HepG2 (cell line): ENCODE measurements at regions of chr3 and their contacts with region 1.

Region 1: GRCh38 chr3:178436773-178437172 is 99.5 kb upstream of the KCNMB2 start:
- DNase-seq: no peak
- ATAC-seq: no peak
- H3K4me3 ChIP-seq: no peak overlapping the region
- H3K27ac ChIP-seq: no peak overlapping the region
- H3K4me1 ChIP-seq: no peaks in the 10 kb centered on the region
- H3K27me3 ChIP-seq: no peaks in the 10 kb centered on the region
- CTCF ChIP-seq: peak; percentile 41
- EP300 ChIP-seq: no peak
- POLR2A ChIP-seq: no peak
- RAD21 ChIP-seq: no peak

Region 2: GRCh38 chr3:178393824-178394223 is 42.9 kb before region 1 on chr3:
- CTCF ChIA-PET with region 1: no interaction called
- POLR2A ChIA-PET with region 1: no interaction called
- in situ Hi-C with region 1: no loop called
- intact Hi-C with region 1: no loop called
- DNase-seq: no peak
- ATAC-seq: no peak
- H3K4me3 ChIP-seq: no peak overlapping the region
- H3K27ac ChIP-seq: no peak overlapping the region
- H3K4me1 ChIP-seq: no peaks in the 10 kb centered on the region
- H3K27me3 ChIP-seq: no peaks in the 10 kb centered on the region
- CTCF ChIP-seq: no peak
- EP300 ChIP-seq: no peak
- POLR2A ChIP-seq: no peak
- RAD21 ChIP-seq: no peak

Region 3: DNA sequence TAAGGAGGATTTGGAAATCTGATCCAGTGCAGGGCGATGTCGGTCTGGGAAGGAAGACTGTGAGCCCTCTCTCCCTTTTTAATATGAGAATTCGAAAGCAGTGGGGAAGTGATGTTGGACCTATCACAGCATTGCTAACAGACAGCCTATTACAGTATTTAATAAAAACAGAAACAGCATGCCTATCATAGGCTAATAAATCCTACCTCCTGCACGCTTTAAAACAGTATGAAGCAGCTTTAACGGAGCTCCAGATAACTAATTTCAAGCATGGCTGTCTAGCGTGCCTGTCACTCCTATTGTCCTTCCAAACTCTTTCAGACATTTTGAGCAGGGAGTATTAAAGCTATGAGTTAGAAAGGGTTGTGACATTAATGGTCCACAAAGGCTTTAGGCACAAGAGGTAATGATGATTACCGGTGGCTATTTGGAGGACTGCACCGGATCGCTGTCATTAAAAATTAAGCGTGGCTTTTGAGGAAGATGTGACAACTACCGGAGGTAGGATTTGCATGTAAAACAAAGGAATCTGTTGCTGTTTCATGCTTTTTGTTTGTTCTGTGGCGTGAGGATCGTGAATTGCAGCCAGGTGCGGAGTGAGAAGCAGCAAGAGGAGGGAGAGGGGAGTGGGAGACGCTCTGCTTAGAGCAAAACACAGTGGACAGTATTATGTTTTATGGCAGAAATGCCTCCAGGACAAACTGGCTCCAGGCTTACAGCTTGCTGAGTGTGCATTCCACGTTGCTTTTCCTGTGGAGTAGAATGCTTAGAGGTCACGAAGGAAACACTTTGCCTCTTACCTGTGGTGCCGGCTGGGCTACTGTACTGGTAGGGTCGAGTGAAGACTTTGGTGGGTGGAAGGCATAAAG is 99.7 kb after region 1 on chr3 and contains the start of gene KCNMB2:
- CTCF ChIA-PET with region 1: no interaction called
- POLR2A ChIA-PET with region 1: no interaction called
- in situ Hi-C with region 1: no loop called
- intact Hi-C with region 1: no loop called
- DNase-seq: no peak
- ATAC-seq: no peak
- H3K4me3 ChIP-seq: no peak within 1 kb of the TSS
- H3K27ac ChIP-seq: no peak within 1 kb of the TSS
- H3K4me1 ChIP-seq: no peaks in the 10 kb centered on the region
- H3K27me3 ChIP-seq: peaks cover 0 to 5% of the 10 kb centered on the region in 2 experiments; a peak in 1 of 5 replicates
- CTCF ChIP-seq: no peak
- EP300 ChIP-seq: no peak
- POLR2A ChIP-seq: no peak
- RAD21 ChIP-seq: no peak
- total RNA-seq, gene KCNMB2: not detected in 2 replicates

Region 4: GRCh38 chr3:178768072-178768864 is 331.5 kb after region 1 on chr3:
- CTCF ChIA-PET with region 1: no interaction called
- POLR2A ChIA-PET with region 1: no interaction called
- in situ Hi-C with region 1: no loop called
- intact Hi-C with region 1: loop called (anchors 10 kb)
- DNase-seq: no peak
- ATAC-seq: no peak
- H3K4me3 ChIP-seq: no peak overlapping the region
- H3K27ac ChIP-seq: no peak overlapping the region
- H3K4me1 ChIP-seq: no peaks in the 10 kb centered on the region
- H3K27me3 ChIP-seq: no peaks in the 10 kb centered on the region
- CTCF ChIP-seq: no peak
- EP300 ChIP-seq: no peak
- POLR2A ChIP-seq: no peak
- RAD21 ChIP-seq: no peak

Region 5: DNA sequence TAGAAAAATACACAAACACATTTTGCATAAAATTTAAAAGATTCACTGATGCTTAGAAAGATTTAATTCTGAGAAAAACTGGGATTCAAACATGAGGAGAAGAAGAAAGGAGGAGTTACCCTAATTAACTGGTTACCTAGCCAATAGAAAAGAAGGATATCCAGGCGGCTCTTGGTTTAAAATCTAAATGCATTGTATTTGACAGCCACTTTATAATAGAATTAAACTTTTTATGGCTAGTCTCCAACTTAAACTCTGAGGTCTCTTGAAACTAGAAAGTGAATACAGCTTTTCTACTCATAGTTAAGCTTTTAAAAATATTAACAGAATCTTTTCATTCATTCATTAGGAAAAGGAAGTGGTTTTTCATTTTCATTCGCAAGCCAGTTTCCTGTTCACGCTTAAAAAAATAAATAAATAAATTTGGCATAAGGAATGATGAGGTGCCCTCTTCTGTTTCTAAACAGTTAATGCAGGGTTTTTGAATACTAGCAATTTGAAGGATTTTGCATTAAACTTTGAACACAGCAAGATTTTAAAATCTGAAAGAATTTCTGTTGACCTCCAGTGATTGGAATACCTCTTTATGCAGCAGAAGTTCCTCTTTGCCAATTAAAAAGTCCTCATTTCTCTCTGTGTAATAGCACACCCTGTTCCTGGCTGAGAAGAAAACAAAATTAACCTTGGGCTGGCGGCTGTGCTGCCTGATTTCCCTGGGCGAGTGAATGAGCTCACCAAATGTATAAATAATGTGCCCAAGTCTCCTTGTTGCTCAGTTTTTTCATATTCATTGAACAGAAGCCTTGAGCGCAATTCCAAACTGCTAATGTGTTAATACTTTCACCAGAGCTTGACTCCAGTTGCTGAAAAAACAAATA is 529.8 kb after region 1 on chr3:
- CTCF ChIA-PET with region 1: interaction called, 7 read pairs
- POLR2A ChIA-PET with region 1: no interaction called
- in situ Hi-C with region 1: loop called (anchors 10 kb)
- intact Hi-C with region 1: loop called (anchors 1 kb)
- DNase-seq: peak; percentile 3
- ATAC-seq: no peak
- H3K4me3 ChIP-seq: no peak overlapping the region
- H3K27ac ChIP-seq: no peak overlapping the region
- H3K4me1 ChIP-seq: no peaks in the 10 kb centered on the region
- H3K27me3 ChIP-seq: no peaks in the 10 kb centered on the region; a peak in 1 of 5 replicates
- CTCF ChIP-seq: peak; percentile 29
- EP300 ChIP-seq: no peak
- POLR2A ChIP-seq: no peak
- RAD21 ChIP-seq: no peak